Esophagus muscularis mucosa (tissue), 4 donors: ENCODE measurements at regions of chr5 and their contacts with region 1.

Region 1: GRCh38 chr5:119332978-119333401 is 22.8 kb upstream of the TNFAIP8 start:
- DNase-seq: no peak
- H3K4me3 ChIP-seq: no peak overlapping the region
- H3K27ac ChIP-seq: no peak overlapping the region
- H3K4me1 ChIP-seq: peaks cover 23 to 48% (median 41%) of the 10 kb centered on the region in 4 donors
- H3K27me3 ChIP-seq: no peaks in the 10 kb centered on the region
- CTCF ChIP-seq: no peak
- EP300 ChIP-seq: no peak
- POLR2A ChIP-seq: no peak

Region 2: DNA sequence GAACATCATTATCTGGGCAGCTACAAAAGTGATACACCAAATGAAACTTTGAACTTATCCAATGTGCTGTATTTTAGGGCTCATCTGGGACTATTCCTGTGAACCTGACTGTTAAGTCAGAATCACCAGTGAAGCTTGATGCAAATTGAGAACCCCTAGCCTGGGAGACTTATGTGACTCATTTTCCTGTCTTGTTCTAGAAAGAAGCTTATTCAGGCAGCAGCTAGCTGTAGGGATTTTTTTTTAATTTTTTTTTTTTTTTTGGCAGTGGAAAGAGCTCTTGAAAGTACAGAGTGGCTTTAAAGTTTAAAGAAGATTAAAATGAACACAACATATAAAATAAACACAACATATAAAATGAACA is 58.2 kb before region 1 on chr5:
- intact Hi-C with region 1: loop called (anchors 5 kb)
- DNase-seq: no peak
- H3K4me3 ChIP-seq: no peak overlapping the region
- H3K27ac ChIP-seq: no peak overlapping the region
- H3K4me1 ChIP-seq: peaks cover 19 to 41% (median 36%) of the 10 kb centered on the region in 4 donors
- H3K27me3 ChIP-seq: no peaks in the 10 kb centered on the region
- CTCF ChIP-seq: no peak
- EP300 ChIP-seq: no peak
- POLR2A ChIP-seq: no peak